Activated B cell treated with CpG ODN at 0.5 μM for 24 hours (primary cell): ENCODE measurements at regions of chr2 and their contacts with region 1.

Region 1: GRCh38 chr2:23926750-23927571 is at the start of gene ATAD2B:
- DNase-seq: peak; percentile 96
- ATAC-seq: peak; percentile 79
- H3K4me3 Mint-ChIP-seq: peak within 1 kb of the TSS; percentile 97
- H3K27ac Mint-ChIP-seq: peak within 1 kb of the TSS; percentile 99
- H3K4me1 Mint-ChIP-seq: peaks cover 46% of the 10 kb centered on the region
- H3K27me3 Mint-ChIP-seq: no peaks in the 10 kb centered on the region
- CTCF ChIP-seq: no peak
- total RNA-seq, gene ATAD2B: 64.5 and 85.5 TPM in 2 replicates

Region 2: GRCh38 chr2:23824777-23825212 is 102.2 kb before region 1 on chr2:
- CTCF ChIA-PET with region 1: interaction called, 32 read pairs
- POLR2A ChIA-PET with region 1: interaction called, 31 read pairs
- intact Hi-C with region 1: loop called (anchors 1 kb)
- DNase-seq: no peak
- ATAC-seq: peak; percentile 65
- H3K4me3 Mint-ChIP-seq: no peak overlapping the region
- H3K27ac Mint-ChIP-seq: no peak overlapping the region
- H3K4me1 Mint-ChIP-seq: peaks cover 2% of the 10 kb centered on the region
- H3K27me3 Mint-ChIP-seq: no peaks in the 10 kb centered on the region
- CTCF ChIP-seq: peak; percentile 18

Region 3: GRCh38 chr2:23904692-23905091 is 22.3 kb before region 1 on chr2:
- CTCF ChIA-PET with region 1: interaction called, 3 read pairs
- POLR2A ChIA-PET with region 1: interaction called, 3 read pairs
- intact Hi-C with region 1: loop called (anchors 2 kb)
- DNase-seq: no peak
- ATAC-seq: no peak
- H3K4me3 Mint-ChIP-seq: no peak overlapping the region
- H3K27ac Mint-ChIP-seq: no peak overlapping the region
- H3K4me1 Mint-ChIP-seq: peaks cover 36% of the 10 kb centered on the region
- H3K27me3 Mint-ChIP-seq: no peaks in the 10 kb centered on the region
- CTCF ChIP-seq: no peak

Region 4: DNA sequence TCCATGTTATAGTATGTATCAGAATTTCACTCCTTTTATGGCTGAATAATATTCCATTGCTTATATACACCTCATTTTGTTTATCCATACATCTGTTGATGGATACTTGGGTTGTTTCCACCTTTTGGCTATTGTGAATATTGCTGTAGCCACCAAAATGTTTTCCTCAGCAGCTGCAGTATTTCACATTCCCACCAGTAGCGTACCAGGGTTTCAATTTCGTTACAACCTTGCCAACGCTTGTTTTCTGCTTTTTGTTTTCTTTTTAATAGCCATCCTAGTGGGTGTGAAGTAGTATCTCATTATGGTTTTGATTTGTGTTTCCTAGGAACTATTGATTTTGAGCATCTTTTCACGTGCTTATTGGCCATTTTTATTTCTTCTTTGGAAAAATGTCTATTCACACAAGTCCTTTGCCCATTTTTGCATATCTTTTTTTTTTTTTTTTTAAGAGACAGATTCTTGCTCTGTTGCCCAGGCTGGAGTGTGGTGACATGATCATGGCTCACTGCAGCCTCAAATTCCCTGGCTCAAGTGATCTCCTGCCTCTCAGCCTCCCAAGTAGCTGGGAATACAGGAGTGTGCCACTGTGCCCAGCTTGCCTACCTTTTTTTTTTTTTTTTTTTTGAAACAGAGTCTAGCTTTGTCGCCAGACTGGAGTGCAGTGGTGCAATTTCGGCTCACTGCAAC is 27.5 kb after region 1 on chr2:
- CTCF ChIA-PET with region 1: no interaction called
- POLR2A ChIA-PET with region 1: no interaction called
- intact Hi-C with region 1: no loop called
- DNase-seq: no peak
- ATAC-seq: no peak
- H3K4me3 Mint-ChIP-seq: no peak overlapping the region
- H3K27ac Mint-ChIP-seq: no peak overlapping the region
- H3K4me1 Mint-ChIP-seq: no peaks in the 10 kb centered on the region
- H3K27me3 Mint-ChIP-seq: no peaks in the 10 kb centered on the region
- CTCF ChIP-seq: no peak

Region 5: DNA sequence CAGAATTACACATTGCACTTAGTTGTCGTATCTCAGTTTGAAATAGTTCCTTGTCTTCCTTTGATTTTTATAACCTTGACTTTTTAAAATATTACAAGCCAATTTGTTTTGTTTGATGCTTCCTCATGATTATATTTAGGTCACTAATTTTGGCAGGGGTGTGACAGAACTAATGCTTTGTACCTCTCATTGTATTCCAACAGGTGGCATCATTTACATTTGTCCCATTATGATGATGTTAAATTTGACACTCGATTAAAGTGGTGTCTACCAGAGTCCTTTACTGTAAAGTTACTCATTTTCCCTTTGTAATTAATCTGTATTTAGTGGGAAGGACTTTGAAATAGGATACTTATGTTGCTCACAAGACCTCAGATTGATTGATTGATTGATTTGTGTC is 61.4 kb after region 1 on chr2:
- CTCF ChIA-PET with region 1: interaction called, 3 read pairs
- POLR2A ChIA-PET with region 1: interaction called, 9 read pairs
- intact Hi-C with region 1: loop called (anchors 2 kb)
- DNase-seq: no peak
- ATAC-seq: no peak
- H3K4me3 Mint-ChIP-seq: no peak overlapping the region
- H3K27ac Mint-ChIP-seq: no peak overlapping the region
- H3K4me1 Mint-ChIP-seq: no peaks in the 10 kb centered on the region
- H3K27me3 Mint-ChIP-seq: no peaks in the 10 kb centered on the region
- CTCF ChIP-seq: no peak

Region 6: GRCh38 chr2:24075915-24076848 is 149.2 kb after region 1 on chr2 and contains the start of gene SF3B6:
- CTCF ChIA-PET with region 1: interaction called, 15 read pairs
- POLR2A ChIA-PET with region 1: interaction called, 111 read pairs
- intact Hi-C with region 1: loop called (anchors 1 kb)
- DNase-seq: peak; percentile 98
- ATAC-seq: peak; percentile 87
- H3K4me3 Mint-ChIP-seq: peak within 1 kb of the TSS; percentile 100
- H3K27ac Mint-ChIP-seq: peak within 1 kb of the TSS; percentile 99
- H3K4me1 Mint-ChIP-seq: peaks cover 28% of the 10 kb centered on the region
- H3K27me3 Mint-ChIP-seq: no peaks in the 10 kb centered on the region
- CTCF ChIP-seq: no peak
- total RNA-seq, gene SF3B6: 70.4 and 71.4 TPM in 2 replicates

Region 7: GRCh38 chr2:24123195-24123921 is 196.4 kb after region 1 on chr2 and contains the starts of genes FAM228B and PFN4:
- CTCF ChIA-PET with region 1: no interaction called
- POLR2A ChIA-PET with region 1: interaction called, 14 read pairs
- intact Hi-C with region 1: loop called (anchors 1 kb)
- DNase-seq: peak; percentile 82
- ATAC-seq: peak; percentile 93
- H3K4me3 Mint-ChIP-seq: peak within 1 kb of the TSS; percentile 85
- H3K27ac Mint-ChIP-seq: peak within 1 kb of the TSS; percentile 92
- H3K4me1 Mint-ChIP-seq: peaks cover 15% of the 10 kb centered on the region
- H3K27me3 Mint-ChIP-seq: no peaks in the 10 kb centered on the region
- CTCF ChIP-seq: no peak
- total RNA-seq, gene FAM228B: 24.7 and 26.2 TPM in 2 replicates
- total RNA-seq, gene PFN4: 0.34 and 0.60 TPM in 2 replicates

Region 8: DNA sequence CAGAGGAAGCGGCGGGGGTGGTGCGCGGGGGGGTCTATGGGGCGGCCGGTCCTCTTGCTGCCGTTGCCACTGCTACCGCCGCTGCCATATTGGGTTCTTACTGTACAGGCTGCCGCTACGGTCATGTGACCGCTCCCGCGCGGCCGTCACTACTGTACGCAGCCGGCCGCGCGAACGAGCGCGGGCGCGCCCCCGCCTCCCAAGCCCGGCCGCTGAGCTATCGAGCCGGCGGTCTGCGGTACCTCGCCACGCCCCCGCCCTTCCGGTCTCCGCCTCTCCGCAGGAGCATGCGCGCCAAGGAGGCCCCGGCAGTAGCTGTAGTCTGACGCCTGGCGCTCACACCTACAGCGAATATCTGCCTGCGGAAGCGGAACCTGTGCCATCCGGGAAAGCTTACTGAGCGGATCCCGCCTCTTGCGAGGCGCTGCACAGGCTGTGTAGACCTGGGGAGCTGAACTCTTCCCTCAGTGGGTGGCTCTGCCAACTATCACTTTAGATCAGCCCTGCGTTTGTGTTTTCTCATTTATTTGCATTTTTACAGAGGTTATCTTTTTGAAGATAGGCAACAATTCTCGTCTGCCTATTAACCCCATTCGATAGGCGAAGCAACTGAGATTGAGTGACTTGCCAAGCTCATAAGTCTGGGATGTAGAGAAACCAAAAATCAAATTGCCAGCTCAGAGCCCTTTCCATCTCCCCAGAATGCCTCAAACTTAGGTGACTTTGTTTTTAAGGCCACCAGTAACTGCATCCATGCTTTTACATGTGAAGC is 1951.6 kb after region 1 on chr2 and contains the start of gene ASXL2:
- CTCF ChIA-PET with region 1: no interaction called
- POLR2A ChIA-PET with region 1: interaction called, 9 read pairs
- intact Hi-C with region 1: loop called (anchors 10 kb)
- DNase-seq: peak; percentile 98
- ATAC-seq: peak; percentile 88
- H3K4me3 Mint-ChIP-seq: peak within 1 kb of the TSS; percentile 98
- H3K27ac Mint-ChIP-seq: peak within 1 kb of the TSS; percentile 100
- H3K4me1 Mint-ChIP-seq: peaks cover 24% of the 10 kb centered on the region
- H3K27me3 Mint-ChIP-seq: peaks cover 2% of the 10 kb centered on the region
- CTCF ChIP-seq: no peak
- total RNA-seq, gene ASXL2: 38.4 and 41.9 TPM in 2 replicates